Spleen (tissue), 13 donors: ENCODE measurements at regions of chr19 and their contacts with region 1.

Region 1: DNA sequence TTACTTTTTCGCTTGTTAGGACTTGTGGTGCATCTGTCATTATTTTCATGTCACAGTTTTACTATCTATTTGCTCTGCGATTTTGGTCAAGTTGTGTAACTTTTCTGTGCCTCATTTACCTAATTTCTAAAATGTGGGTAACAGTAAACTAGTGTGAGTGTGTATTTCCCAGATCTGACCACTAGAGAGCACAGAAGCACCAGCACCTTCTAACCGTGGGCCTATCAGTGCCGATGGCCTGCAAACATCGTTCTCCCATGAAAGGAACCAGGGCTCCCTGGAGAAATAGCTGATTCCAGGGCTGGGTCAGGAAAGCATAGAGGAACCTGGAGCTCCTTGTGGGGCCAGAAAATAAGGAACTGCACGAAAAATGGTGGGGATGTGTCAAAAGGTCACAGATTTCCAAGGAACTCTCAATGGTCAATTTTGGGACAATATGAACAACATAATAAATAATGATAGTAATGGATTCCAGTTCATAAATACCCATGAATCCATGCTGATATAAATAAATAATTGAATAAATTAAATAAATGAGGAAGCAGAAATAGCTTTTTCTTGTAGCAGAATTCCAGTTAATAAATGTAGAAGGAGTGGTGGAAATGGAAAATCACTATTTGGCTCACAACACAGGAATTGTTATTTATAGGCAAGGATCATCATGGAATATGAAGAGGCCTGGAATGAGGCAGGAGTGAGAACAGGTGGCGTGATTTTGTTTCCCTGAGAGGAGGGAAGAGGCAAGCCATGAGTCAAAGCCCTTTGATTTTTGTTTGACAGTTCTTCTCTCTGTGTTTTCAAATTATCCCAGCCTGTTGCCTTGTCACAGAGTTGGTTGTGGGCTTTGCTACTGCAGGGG is 31.1 kb downstream of the CEACAM8 start:
- DNase-seq: no peak
- H3K4me3 ChIP-seq: no peak overlapping the region
- H3K27ac ChIP-seq: no peak overlapping the region
- H3K4me1 ChIP-seq: peaks cover 11 to 54% (median 21%) of the 10 kb centered on the region in 6 donors
- H3K27me3 ChIP-seq: peaks cover 0 to 29% (median 0%) of the 10 kb centered on the region in 7 donors
- CTCF ChIP-seq: peak; percentile 27 to 68 (median 60)
- POLR2A ChIP-seq: no peak

Region 2: DNA sequence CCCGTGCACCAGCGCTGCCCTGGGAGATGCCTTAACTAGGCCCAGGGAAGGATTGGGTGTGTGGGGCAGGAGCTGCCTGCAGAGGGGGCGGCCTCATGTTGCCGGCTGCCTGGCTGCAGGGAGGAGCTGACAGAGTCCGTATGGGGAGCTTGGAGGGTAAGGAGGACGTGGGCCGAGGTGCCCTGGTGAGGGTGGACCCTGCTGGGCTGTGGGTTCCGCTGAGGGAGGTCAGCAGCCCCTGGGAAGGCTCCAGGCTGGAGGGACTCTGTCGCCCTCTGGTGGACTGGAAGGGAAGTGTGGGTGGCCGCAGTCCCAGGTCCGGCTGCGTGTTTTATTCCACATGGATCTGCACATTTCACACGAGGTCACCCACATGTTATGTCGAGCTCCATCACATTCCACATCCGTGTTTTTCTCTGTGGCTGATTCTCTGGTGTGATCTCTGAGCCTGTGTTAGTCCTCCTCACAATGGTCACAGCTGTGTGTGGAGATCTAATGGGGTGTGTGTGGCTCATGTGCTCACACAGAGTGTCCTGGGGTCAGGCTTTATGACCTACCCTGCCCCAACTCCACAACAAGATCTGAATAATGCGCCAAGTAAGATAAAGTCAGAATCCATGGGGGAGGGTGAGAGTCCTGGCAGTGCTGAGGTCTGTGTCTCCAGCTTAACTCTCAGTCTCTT is 33.0 kb after region 1 on chr19:
- intact Hi-C with region 1: loop called (anchors 5 kb)
- DNase-seq: peak; percentile 87
- H3K4me3 ChIP-seq: no peak overlapping the region
- H3K27ac ChIP-seq: no peak overlapping the region
- H3K4me1 ChIP-seq: peaks cover 0 to 46% (median 7%) of the 10 kb centered on the region in 6 donors
- H3K27me3 ChIP-seq: peaks cover 0 to 31% (median 0%) of the 10 kb centered on the region in 7 donors
- CTCF ChIP-seq: peak; percentile 82 to 96 (median 91)
- POLR2A ChIP-seq: no peak

Region 3: GRCh38 chr19:42613666-42614065 is 50.1 kb after region 1 on chr19:
- intact Hi-C with region 1: no loop called
- DNase-seq: no peak
- H3K4me3 ChIP-seq: no peak overlapping the region
- H3K27ac ChIP-seq: no peak overlapping the region
- H3K4me1 ChIP-seq: no peaks in the 10 kb centered on the region
- H3K27me3 ChIP-seq: peaks cover 0 to 34% (median 0%) of the 10 kb centered on the region in 7 donors
- CTCF ChIP-seq: no peak
- POLR2A ChIP-seq: no peak